Activated naive CD4-positive, alpha-beta T cell treated with anti-CD3 and anti-CD28 coated beads, Interleukin-2, amount 10 ng/mL, durations not matched to agents 7 days and 5 days (primary cell): ENCODE measurements at regions of chr2 and their contacts with region 1.

Region 1: DNA sequence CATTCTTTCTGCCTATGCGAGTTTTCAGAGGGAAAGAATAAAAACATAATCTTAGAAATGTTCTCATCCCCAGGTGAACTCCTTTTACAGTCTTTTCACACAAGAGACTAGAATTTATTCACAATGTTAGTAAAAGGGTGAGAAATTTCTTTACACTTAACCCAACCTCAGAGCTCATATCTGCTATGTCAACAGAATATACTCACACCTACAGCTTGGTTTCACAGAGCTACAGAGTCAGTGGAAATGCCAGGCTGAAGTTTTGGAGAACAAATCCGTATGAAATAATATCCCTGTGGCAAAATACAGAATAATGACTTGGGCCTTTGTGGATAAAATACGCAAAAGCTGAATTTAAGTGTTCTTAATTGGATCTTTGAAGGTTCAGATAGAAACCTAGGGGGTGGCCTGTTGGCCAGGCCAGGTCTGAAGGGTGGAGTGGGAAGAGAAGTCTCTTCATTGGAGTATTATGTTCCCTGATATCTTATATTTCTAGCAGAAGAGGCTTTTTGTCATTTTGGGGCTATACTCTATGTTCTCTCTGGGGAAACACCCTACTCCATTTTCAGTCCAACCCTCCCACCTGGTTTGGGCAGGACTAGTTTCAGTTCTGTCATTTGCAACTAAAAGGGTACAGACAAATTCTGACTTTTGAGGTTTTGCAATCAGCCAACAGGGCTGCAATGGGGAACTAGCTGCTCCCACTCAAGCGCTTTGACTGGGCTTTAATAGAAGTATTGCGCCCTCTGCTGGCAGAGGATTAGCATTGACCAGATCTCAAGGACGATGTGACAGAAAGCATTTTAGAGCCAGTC is 25.7 kb downstream of the FBXO48 start:
- DNase-seq: peak; percentile 85
- H3K4me3 Mint-ChIP-seq: no peak overlapping the region
- H3K27ac Mint-ChIP-seq: peak overlapping the region; percentile 11
- H3K4me1 Mint-ChIP-seq: peaks cover 7% of the 10 kb centered on the region
- H3K27me3 Mint-ChIP-seq: peaks cover 24% of the 10 kb centered on the region

Region 2: GRCh38 chr2:68169297-68169696 is 272.1 kb before region 1 on chr2:
- CTCF ChIA-PET with region 1: no interaction called
- DNase-seq: no peak
- H3K4me3 Mint-ChIP-seq: no peak overlapping the region
- H3K27ac Mint-ChIP-seq: no peak overlapping the region
- H3K4me1 Mint-ChIP-seq: peaks cover 10% of the 10 kb centered on the region
- H3K27me3 Mint-ChIP-seq: no peaks in the 10 kb centered on the region

Region 3: GRCh38 chr2:68357605-68358337 is 83.6 kb before region 1 on chr2:
- CTCF ChIA-PET with region 1: interaction called, 49 read pairs
- DNase-seq: no peak
- H3K4me3 Mint-ChIP-seq: no peak overlapping the region
- H3K27ac Mint-ChIP-seq: no peak overlapping the region
- H3K4me1 Mint-ChIP-seq: peaks cover 6% of the 10 kb centered on the region
- H3K27me3 Mint-ChIP-seq: peaks cover 7% of the 10 kb centered on the region

Region 4: DNA sequence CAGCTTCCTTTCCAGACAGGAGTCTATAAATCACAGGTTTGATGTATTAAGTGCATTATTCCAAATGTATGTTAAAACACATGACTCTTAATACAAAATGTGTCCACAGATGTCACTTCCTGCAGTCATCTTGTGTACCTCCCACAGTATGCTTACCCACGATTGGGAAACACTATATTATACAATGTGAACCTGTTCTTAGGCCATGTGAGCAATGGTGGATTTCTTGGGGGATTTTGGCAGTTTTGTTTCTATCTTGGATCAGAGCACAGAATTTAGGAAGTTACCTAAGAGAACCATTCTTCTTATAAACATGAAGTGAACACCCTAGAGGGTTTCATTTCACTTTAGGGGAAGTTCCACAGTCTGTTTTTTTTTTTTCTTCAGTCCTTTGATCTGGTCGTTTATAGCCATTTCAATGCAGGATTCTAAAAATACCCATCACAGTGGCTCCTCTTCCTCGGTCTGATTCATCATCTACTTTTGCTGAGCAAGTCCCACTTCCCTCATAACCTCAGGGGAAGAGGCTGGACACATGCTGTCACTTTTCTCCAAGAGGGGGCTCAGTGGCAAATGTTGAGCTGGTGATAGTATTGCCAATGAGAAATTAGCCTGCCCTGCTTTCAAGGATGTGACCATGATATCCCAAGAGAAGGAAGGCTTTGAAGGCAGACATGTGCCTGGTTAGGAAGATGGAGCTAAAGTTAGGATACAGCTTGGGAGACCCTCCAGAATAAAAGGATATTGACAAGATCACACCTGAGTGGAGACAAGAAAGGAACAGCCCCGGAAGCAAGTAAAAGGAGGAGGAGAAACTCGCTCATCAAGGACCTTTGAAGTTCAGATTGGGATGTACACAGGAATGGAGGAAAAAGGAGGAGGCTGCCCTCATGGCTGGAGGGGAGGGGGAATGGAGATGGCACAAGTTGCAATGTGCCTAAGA is 53.7 kb before region 1 on chr2:
- CTCF ChIA-PET with region 1: interaction called, 17 read pairs
- DNase-seq: peak; percentile 25
- H3K4me3 Mint-ChIP-seq: no peak overlapping the region
- H3K27ac Mint-ChIP-seq: peak overlapping the region; percentile 79
- H3K4me1 Mint-ChIP-seq: peaks cover 38% of the 10 kb centered on the region
- H3K27me3 Mint-ChIP-seq: peaks cover 24% of the 10 kb centered on the region